Activated CD4-positive, alpha-beta T cell treated with anti-CD3 and anti-CD28 coated beads, Interleukin-2, amount 10 ng/mL, durations not matched to agents 24 days and 14 days (primary cell): ENCODE measurements at regions of chr9 and their contacts with region 1.

Region 1: DNA sequence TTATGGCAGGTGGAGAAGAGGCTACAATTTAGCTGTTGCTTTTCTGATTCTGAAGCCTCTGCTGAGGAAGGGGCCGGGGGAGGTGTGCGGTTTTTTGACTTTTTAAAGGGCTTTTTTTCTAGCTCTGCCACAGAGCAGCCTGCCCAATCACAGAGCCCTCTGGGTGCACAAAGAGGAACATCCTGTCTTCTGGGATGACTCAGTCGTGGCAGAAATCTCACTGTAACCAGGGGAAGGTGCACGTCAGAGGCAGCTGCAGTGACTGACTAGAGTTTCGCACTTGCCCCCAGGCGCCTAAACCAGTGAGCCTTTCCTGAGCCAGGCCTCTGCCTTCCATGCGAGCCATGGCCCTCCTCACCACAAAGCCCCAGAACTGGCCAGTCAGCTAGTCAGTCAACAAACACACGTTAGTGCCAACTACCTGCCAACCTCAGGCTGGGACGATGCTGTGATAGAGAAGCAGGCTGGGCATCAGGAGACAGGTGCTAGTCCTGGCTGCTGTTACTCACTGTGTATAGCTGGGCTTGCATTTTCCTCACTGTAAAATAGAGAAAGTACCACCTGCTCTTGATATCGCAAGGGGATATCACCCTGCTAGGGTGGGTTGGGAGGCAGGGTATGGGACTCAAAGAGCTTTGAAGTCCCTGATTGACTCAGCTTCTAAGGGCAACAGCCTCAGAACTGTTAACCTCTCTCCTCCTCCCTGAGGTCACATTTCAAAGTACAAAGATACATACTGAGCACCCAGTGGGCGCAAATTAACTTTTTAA is 2.2 kb downstream of the AKNA start:
- DNase-seq: peak; percentile 97
- H3K4me3 Mint-ChIP-seq: peak overlapping the region; percentile 96
- H3K27ac Mint-ChIP-seq: peak overlapping the region; percentile 93
- H3K4me1 Mint-ChIP-seq: peaks cover 61% of the 10 kb centered on the region
- H3K27me3 Mint-ChIP-seq: no peaks in the 10 kb centered on the region

Region 2: GRCh38 chr9:114339130-114339908 is 46.3 kb before region 1 on chr9:
- intact Hi-C with region 1: loop called (anchors 1 kb)
- DNase-seq: peak; percentile 84
- H3K4me3 Mint-ChIP-seq: no peak overlapping the region
- H3K27ac Mint-ChIP-seq: no peak overlapping the region
- H3K4me1 Mint-ChIP-seq: peaks cover 13% of the 10 kb centered on the region
- H3K27me3 Mint-ChIP-seq: no peaks in the 10 kb centered on the region

Region 3: DNA sequence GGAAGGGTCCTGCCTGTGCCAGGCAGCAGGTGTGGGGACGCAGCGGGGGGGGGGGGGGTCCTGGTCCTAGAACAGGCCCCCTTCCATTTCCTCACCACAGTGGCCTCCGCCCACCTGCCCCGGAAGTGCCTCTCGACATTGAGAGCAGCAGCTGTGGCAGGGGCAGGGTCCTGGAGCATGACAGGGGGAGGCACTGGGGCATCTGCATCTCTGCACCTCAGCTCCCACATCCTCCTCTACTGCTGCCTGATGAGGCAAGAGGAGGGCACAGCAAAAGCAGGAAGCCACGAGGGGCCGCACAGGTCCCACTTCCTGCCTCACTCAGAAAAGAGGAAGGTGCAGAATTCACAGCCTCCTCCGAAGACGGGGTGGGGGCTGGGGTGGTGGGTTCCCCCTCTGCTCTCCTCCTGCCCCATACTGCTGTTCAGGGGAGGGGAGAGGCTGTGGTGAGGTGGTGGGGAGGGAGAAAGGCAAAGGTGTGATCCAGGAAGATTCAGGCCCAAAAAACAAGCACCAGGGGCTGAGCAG is 12.6 kb before region 1 on chr9:
- intact Hi-C with region 1: loop called (anchors 1 kb)
- DNase-seq: peak; percentile 95
- H3K4me3 Mint-ChIP-seq: peak overlapping the region; percentile 83
- H3K27ac Mint-ChIP-seq: peak overlapping the region; percentile 96
- H3K4me1 Mint-ChIP-seq: peaks cover 76% of the 10 kb centered on the region
- H3K27me3 Mint-ChIP-seq: no peaks in the 10 kb centered on the region

Region 4: GRCh38 chr9:114420581-114420980 is 35.0 kb after region 1 on chr9:
- intact Hi-C with region 1: no loop called
- DNase-seq: no peak
- H3K4me3 Mint-ChIP-seq: no peak overlapping the region
- H3K27ac Mint-ChIP-seq: no peak overlapping the region
- H3K4me1 Mint-ChIP-seq: peaks cover 7% of the 10 kb centered on the region
- H3K27me3 Mint-ChIP-seq: no peaks in the 10 kb centered on the region

Region 5: GRCh38 chr9:114696814-114697544 is 311.4 kb after region 1 on chr9:
- intact Hi-C with region 1: loop called (anchors 5 kb)
- DNase-seq: peak; percentile 92
- H3K4me3 Mint-ChIP-seq: peak overlapping the region; percentile 79
- H3K27ac Mint-ChIP-seq: peak overlapping the region; percentile 100
- H3K4me1 Mint-ChIP-seq: peaks cover 79% of the 10 kb centered on the region
- H3K27me3 Mint-ChIP-seq: no peaks in the 10 kb centered on the region

Region 6: GRCh38 chr9:114930056-114930812 is 544.6 kb after region 1 on chr9 and contains the start of gene TNFSF8:
- intact Hi-C with region 1: loop called (anchors 5 kb)
- DNase-seq: peak; percentile 94
- H3K4me3 Mint-ChIP-seq: peak within 1 kb of the TSS; percentile 90
- H3K27ac Mint-ChIP-seq: peak within 1 kb of the TSS; percentile 99
- H3K4me1 Mint-ChIP-seq: peaks cover 59% of the 10 kb centered on the region
- H3K27me3 Mint-ChIP-seq: no peaks in the 10 kb centered on the region
- total RNA-seq, gene TNFSF8: 148 and 150 TPM in 2 replicates